OCI-LY7 (cell line): ENCODE measurements at regions of chr3 and their contacts with region 1.

Region 1: DNA sequence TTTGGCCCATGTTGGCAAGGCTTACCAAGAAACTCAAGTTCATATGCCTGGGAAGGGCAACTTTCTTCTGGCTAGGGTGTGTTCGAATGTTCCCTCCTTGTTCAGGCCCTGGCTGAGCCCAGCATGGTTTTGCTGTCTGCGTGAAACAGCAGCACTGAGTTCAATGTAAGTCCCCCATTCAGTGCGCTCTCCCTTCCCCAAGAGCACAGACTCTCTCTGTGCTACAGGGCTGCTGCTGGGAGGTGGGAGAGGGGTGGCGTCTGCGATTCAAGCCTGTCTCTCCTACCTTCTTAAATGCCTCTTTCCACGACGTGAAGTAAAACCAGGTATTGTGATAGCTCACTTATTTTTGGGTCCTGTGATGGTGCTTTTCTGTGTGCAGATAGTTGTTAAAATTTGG is 289.3 kb upstream of the GOLIM4 start:
- DNase-seq: no peak
- H3K4me3 ChIP-seq: no peak overlapping the region
- H3K27ac ChIP-seq: no peak overlapping the region
- H3K4me1 ChIP-seq: no peaks in the 10 kb centered on the region
- CTCF ChIP-seq: no peak

Region 2: DNA sequence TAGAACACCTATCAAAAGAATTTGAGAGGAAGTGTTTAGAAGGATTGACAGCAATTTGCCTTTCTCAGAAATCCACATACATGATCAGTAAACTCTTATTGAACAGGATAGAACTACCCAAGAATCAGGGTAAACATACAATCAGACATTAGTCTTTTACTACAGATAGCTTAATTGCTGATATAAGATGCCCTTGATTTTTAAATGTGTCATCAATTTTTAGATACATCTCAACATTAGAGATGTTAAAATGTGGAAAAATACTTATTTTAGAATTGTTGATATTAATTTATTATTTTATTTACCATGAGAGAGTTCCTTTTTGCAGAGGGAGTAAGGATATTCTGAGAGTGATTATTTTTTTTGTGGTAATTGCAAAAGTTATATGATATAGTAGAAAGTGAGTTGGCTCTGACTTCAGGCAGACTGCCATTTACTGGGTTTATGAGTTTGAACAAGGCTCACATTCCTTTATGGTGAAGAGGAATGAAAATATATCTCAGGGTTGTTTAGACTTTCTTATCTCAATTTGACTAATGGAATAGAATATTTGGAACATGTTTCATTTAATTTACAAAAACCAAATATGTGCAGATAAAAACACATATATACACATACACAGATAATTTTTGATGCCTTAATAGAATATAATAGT is 13.5 kb after region 1 on chr3:
- CTCF ChIA-PET with region 1: no interaction called
- POLR2A ChIA-PET with region 1: interaction called, 11 read pairs
- intact Hi-C with region 1: no loop called
- DNase-seq: no peak
- H3K4me3 ChIP-seq: no peak overlapping the region
- H3K27ac ChIP-seq: no peak overlapping the region
- H3K4me1 ChIP-seq: no peaks in the 10 kb centered on the region
- CTCF ChIP-seq: no peak

Region 3: DNA sequence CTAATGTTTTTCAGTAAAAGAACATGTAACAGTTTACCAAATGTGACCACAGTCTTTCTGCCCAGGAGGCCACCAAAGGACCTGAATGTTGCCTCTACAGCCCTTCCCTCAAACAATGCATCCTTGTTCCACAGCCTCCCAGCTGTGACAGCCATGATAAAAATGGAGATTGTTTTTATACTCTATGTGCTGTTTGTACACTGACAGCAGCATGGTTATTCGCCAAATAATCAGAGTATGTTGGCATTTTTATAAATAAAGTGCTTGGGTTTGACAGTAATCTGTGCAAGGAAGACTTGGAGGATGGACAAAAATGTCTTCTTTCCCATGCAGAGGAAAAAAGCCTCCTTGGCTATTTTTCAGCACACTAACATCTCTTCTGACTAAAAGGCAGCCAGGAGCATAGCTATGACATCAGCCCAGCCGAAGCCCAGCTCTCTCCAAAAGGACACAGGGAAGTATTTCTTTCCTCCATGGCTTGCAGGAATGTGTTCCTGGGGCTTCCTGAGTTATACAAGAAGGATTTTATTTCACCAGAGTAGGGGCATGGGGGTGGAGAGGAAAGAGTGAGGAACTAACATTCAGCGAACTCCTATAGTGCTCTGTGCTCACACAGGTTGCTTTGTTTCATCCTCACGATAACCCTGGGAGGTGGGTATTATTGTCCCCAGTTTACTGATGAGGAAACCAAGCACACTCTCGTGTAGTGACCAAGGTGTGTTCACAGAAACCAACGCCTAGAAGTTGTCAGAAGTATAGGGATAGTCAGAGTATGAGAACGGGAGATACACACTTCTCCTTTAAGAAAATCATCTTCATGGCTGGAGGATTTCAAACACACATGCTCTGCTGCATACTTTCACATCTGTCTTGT is 938.8 kb after region 1 on chr3:
- CTCF ChIA-PET with region 1: no interaction called
- POLR2A ChIA-PET with region 1: no interaction called
- intact Hi-C with region 1: no loop called
- DNase-seq: no peak
- H3K4me3 ChIP-seq: no peak overlapping the region
- H3K27ac ChIP-seq: no peak overlapping the region
- H3K4me1 ChIP-seq: no peaks in the 10 kb centered on the region
- CTCF ChIP-seq: no peak